ENCODE measurements at regions of chr22 and their contacts with region 1.

Region 1: DNA sequence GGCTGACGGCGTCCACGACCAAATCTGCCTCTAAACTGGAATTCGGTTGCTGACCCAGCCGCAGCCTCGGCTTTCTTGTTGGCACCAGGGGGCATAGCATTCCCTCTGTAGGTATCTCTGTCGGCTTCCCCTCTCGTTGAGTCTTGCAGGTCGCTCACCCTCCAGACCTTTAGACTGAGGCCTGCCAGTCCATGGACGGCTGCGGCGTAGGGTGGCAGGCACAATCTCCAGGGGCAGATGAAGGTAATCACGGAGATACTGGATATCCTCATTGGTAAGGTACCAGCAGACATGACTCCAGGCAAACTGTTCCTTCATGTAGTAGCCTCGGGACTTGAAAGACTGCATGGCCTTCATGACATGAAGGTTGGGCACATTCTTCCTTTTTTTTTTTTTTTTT is 142.2 kb downstream of the BCR start:
- DNase-seq: no peak
- H3K4me3 ChIP-seq: no peak overlapping the region
- H3K27ac ChIP-seq: no peak overlapping the region
- H3K4me1 ChIP-seq: no peaks in the 10 kb centered on the region
- CTCF ChIP-seq: peak; percentile 22; the same call in 1 of the 2 replicates

Region 2: GRCh38 chr22:23088199-23088604 is 234.3 kb before region 1 on chr22:
- CTCF ChIA-PET with region 1: no interaction called
- POLR2A ChIA-PET with region 1: no interaction called
- intact Hi-C with region 1: no loop called
- DNase-seq: no peak
- H3K4me3 ChIP-seq: no peak overlapping the region
- H3K27ac ChIP-seq: no peak overlapping the region
- H3K4me1 ChIP-seq: peaks cover 20% of the 10 kb centered on the region
- CTCF ChIP-seq: no peak

Region 3: GRCh38 chr22:23305922-23306374 is 16.6 kb before region 1 on chr22:
- CTCF ChIA-PET with region 1: no interaction called
- POLR2A ChIA-PET with region 1: no interaction called
- intact Hi-C with region 1: no loop called
- DNase-seq: no peak
- H3K4me3 ChIP-seq: no peak overlapping the region
- H3K27ac ChIP-seq: no peak overlapping the region
- H3K4me1 ChIP-seq: no peaks in the 10 kb centered on the region
- CTCF ChIP-seq: no peak

Region 4: GRCh38 chr22:23357053-23357452 is 34.5 kb after region 1 on chr22:
- CTCF ChIA-PET with region 1: no interaction called
- POLR2A ChIA-PET with region 1: no interaction called
- intact Hi-C with region 1: no loop called
- DNase-seq: no peak
- H3K4me3 ChIP-seq: no peak overlapping the region
- H3K27ac ChIP-seq: no peak overlapping the region
- H3K4me1 ChIP-seq: no peaks in the 10 kb centered on the region
- CTCF ChIP-seq: no peak

Region 5: GRCh38 chr22:23533328-23533762 is 210.8 kb after region 1 on chr22:
- CTCF ChIA-PET with region 1: interaction called, 10 read pairs
- POLR2A ChIA-PET with region 1: no interaction called
- intact Hi-C with region 1: loop called (anchors 5 kb)
- DNase-seq: peak; percentile 70
- H3K4me3 ChIP-seq: no peak overlapping the region
- H3K27ac ChIP-seq: no peak overlapping the region
- H3K4me1 ChIP-seq: peaks cover 36% of the 10 kb centered on the region
- CTCF ChIP-seq: peak; percentile 55